ENCODE measurements at regions of chr12 and their contacts with region 1.

Region 1: DNA sequence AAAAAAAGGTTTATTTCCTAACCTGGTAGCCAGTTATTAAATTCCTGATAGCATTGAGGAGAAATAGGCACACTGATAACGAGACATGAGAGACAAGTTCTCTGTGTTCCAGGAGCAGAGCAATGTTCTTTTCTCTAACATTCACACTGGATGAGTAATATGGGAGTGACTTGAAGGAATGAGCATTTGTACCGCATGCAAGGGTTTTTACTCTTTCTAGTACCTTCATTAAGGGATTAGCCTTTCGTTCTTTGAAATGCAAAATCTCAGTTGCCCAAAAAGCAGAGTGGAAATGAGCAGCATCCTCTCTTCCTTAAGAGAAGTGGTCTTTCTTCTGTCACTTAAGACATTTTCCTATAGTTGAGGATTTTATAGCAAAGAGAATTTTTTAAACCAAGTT is 54.7 kb downstream of the FGD4 start:
- DNase-seq: peak; percentile 34
- H3K4me3 ChIP-seq: no peak overlapping the region
- H3K27ac ChIP-seq: peak overlapping the region; percentile 63
- H3K27me3 ChIP-seq: no peaks in the 10 kb centered on the region
- CTCF ChIP-seq: no peak

Region 2: GRCh38 chr12:32334371-32334777 is 119.7 kb before region 1 on chr12:
- in situ Hi-C with region 1: no loop called
- DNase-seq: no peak
- H3K4me3 ChIP-seq: no peak overlapping the region
- H3K27ac ChIP-seq: no peak overlapping the region
- H3K27me3 ChIP-seq: no peaks in the 10 kb centered on the region
- CTCF ChIP-seq: no peak

Region 3: DNA sequence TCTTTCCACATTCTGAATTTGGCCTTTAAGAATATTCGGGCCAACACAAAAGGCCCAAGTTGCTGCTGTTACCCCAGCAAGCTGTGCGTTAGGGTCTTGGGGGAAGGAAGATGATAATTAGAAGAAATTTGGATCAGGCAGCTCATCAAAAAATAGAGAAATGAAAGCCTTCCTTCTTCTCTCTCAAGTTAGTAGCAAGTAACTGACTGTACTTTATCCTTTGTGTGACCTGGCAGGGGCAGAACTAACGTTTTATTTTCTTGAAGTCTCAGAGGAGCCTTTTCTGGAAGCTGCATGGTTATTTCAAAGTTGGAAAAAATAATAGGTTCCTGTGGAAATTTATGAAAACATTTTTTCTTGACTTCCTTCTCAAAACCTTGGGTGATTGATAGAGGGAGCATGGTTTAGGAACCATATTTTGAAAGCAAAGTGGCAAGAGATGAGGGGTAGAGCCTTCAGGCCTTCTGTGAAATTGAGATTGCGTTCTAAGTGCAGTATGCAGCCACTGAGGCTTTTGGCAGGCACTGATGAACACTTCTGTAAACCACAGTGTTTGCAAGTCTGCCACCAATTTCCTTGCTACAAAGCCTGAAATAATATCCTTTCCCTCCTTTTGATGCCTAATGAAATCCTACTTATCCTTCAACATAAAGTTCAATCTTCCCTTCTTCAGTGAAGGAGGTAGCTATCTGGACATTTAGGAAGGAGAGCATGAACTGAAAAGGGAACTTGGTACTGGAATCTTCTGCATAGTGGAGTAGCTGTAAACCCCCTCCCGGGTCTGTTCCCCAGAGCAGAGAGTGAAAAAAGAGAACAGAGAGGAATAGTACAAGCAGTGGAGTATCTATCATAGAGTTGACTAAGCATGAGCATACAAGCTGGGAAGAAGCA is 68.5 kb after region 1 on chr12:
- in situ Hi-C with region 1: no loop called
- DNase-seq: no peak
- H3K4me3 ChIP-seq: no peak overlapping the region
- H3K27ac ChIP-seq: no peak overlapping the region
- H3K27me3 ChIP-seq: no peaks in the 10 kb centered on the region
- CTCF ChIP-seq: no peak

Region 4: GRCh38 chr12:32671930-32672780 is 218.1 kb after region 1 on chr12:
- in situ Hi-C with region 1: loop called (anchors 5 kb)
- DNase-seq: peak; percentile 56
- H3K4me3 ChIP-seq: no peak overlapping the region
- H3K27ac ChIP-seq: no peak overlapping the region
- H3K27me3 ChIP-seq: no peaks in the 10 kb centered on the region
- CTCF ChIP-seq: peak; percentile 74

Region 5: DNA sequence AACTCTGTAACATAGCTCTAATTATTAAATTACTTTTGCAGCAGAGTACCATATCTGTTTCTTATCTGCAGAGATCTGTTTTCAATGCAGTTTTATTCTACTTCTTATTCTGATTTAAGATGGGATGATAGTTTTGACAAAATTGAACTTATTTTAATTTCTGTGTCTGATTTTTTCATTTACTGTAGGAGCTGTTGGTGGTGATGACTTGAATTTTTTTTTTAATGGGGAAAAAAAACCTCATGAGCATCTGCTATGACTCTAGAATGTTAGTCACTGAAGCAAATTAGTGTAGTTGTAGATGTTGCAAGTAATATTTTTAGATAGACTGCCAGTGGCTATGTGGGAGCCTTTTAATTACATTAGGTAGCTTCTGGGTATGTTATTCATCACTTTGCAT is 248.4 kb after region 1 on chr12:
- in situ Hi-C with region 1: no loop called
- DNase-seq: no peak
- H3K4me3 ChIP-seq: no peak overlapping the region
- H3K27ac ChIP-seq: no peak overlapping the region
- H3K27me3 ChIP-seq: no peaks in the 10 kb centered on the region
- CTCF ChIP-seq: no peak